CD4-positive, alpha-beta memory T cell (primary cell): ENCODE measurements at regions of chr10 and their contacts with region 1.

Region 1: GRCh38 chr10:24724381-24725228 is 918 bp upstream of the ARHGAP21 start:
- DNase-seq: peak; percentile 91 to 95 (median 94)
- H3K4me3 ChIP-seq: peak overlapping the region; percentile 88 to 90
- H3K4me3 Mint-ChIP-seq: peak overlapping the region; percentile 93 to 95 (median 95)
- H3K27ac ChIP-seq: peak overlapping the region; percentile 71
- H3K27ac Mint-ChIP-seq: peak overlapping the region; percentile 89 to 94 (median 92)
- H3K4me1 ChIP-seq: peaks cover 24% of the 10 kb centered on the region
- H3K4me1 Mint-ChIP-seq: peaks cover 5 to 25% (median 16%) of the 10 kb centered on the region in 4 donors
- H3K27me3 ChIP-seq: no peaks in the 10 kb centered on the region
- H3K27me3 Mint-ChIP-seq: no peaks in the 10 kb centered on the region

Region 2: DNA sequence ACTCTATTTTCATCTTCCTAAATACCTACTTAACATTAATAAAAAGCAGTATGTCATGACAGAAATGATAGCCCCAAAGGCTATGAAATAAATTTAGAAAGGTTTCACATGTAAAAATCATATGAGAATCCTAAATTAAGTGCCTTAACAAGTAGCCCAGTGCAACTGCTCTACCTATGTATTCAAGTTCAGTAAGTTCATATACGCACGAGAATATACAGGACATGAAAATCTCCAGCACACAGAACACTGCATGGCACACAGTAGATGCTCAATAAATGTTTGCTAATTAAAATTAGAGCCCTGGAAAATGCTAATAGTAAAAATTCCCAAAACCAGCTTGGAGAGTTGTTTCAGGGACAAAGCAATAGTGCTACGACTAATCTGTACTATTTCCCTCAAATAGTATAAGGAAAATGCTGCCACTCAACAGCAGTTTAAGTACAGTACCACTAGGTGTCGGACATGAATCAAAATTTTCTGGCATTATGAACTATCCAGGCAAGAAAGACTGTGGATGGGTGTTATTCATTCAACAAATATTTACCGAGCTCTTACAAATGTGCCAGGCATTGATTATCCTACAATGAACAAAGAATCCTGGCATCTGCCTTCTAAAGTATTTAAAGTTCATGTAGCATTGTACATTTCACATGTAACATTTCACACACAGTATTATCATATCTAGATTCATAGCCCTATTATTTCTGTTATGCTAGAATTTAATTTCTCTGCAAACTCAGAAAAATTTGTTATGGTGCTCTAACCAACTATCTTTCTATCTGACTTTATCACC is 81.8 kb before region 1 on chr10:
- CTCF ChIA-PET with region 1: interaction called, 8 read pairs
- POLR2A ChIA-PET with region 1: interaction called, 3 read pairs
- intact Hi-C with region 1: loop called (anchors 2 kb)
- DNase-seq: peak in 4 of 5 donors; percentile 54 to 58 (median 54)
- H3K4me3 ChIP-seq: no peak overlapping the region
- H3K4me3 Mint-ChIP-seq: no peak overlapping the region
- H3K27ac ChIP-seq: no peak overlapping the region
- H3K27ac Mint-ChIP-seq: no peak overlapping the region
- H3K4me1 ChIP-seq: peaks cover 11% of the 10 kb centered on the region
- H3K4me1 Mint-ChIP-seq: peaks cover 0 to 4% (median 2%) of the 10 kb centered on the region in 4 donors
- H3K27me3 ChIP-seq: no peaks in the 10 kb centered on the region
- H3K27me3 Mint-ChIP-seq: peaks cover 0 to 1% of the 10 kb centered on the region in 2 donors

Region 3: DNA sequence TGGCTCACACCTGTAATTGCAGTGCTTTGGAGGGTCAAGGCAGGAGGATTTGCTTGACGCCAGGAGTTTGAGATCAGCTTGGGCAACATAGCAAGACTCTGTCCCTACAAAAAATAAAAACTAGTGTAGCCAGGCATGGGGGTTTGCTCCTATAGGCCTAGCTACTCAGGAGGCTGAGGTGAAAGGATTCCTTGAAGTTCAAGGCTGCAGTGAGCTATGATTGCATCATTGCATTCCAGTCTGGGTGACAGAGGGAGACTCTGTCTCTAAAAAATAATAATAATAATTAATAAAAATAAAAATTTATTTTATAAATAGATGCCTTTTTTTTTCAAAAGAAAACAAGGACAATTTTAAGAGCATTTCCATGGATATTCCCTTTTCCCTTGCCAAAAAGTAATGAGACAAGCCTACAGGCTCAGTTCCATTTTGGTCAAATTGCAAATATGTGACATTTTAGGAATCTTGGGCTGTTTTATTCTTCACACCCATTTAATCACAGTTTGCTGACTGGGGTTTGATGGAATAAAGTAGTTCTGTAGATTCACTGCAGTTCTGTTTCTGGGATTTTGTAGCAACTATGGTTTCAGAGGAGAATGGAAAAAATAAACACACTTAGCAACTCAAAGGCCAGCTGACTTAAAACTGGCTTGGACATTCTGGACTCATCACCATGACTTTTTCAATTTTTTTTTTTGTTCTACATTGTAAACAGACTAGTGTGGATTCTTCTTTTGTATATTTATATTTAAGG is 47.5 kb after region 1 on chr10:
- CTCF ChIA-PET with region 1: no interaction called
- POLR2A ChIA-PET with region 1: no interaction called
- intact Hi-C with region 1: no loop called
- DNase-seq: no peak
- H3K4me3 ChIP-seq: no peak overlapping the region
- H3K4me3 Mint-ChIP-seq: no peak overlapping the region
- H3K27ac ChIP-seq: no peak overlapping the region
- H3K27ac Mint-ChIP-seq: no peak overlapping the region
- H3K4me1 ChIP-seq: no peaks in the 10 kb centered on the region
- H3K4me1 Mint-ChIP-seq: peaks cover 0 to 4% (median 0%) of the 10 kb centered on the region in 4 donors
- H3K27me3 ChIP-seq: no peaks in the 10 kb centered on the region
- H3K27me3 Mint-ChIP-seq: peaks cover 0 to 2% of the 10 kb centered on the region in 2 donors

Region 4: DNA sequence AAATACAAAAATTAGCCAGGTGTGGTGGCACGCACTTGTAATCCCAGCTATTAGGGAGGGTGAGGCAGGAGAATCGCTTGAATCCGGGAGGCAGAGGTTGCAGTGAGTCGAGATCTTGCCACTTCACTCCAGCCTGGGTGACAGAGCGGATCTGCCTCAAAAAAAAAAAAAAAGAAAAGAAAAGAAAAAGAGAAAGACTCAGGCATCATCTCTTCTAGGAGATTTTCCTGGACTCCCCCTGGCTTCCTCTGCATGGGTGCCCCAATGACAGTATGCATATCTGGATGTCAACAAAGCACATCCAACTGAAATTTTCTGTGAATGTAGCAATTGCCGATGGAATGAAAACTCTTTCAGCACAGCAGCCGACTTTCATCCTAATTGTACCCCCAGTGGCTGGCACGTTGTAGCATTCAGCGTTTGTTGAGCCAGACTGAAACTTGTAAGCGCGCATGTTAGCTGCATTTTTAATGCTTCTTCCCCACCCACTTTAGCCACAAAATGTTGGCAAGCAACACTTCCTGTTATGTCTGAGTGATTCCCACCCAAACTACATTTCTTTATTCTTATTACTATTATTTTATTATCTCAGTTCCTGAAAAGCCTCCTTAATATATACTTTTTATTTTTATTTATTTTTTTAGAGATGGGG is 157.6 kb after region 1 on chr10:
- CTCF ChIA-PET with region 1: interaction called, 3 read pairs
- POLR2A ChIA-PET with region 1: interaction called, 22 read pairs
- intact Hi-C with region 1: loop called (anchors 2 kb)
- DNase-seq: peak; percentile 47 to 60 (median 52)
- H3K4me3 ChIP-seq: peak overlapping the region in 1 of 2 donors; percentile 39
- H3K4me3 Mint-ChIP-seq: peak overlapping the region; percentile 74 to 89 (median 86)
- H3K27ac ChIP-seq: peak overlapping the region; percentile 25
- H3K27ac Mint-ChIP-seq: peak overlapping the region; percentile 82 to 97 (median 91)
- H3K4me1 ChIP-seq: peaks cover 65% of the 10 kb centered on the region
- H3K4me1 Mint-ChIP-seq: peaks cover 28 to 67% (median 41%) of the 10 kb centered on the region in 4 donors
- H3K27me3 ChIP-seq: no peaks in the 10 kb centered on the region
- H3K27me3 Mint-ChIP-seq: no peaks in the 10 kb centered on the region

Region 5: GRCh38 chr10:24952707-24953645 is 228.4 kb after region 1 on chr10:
- CTCF ChIA-PET with region 1: interaction called, 7 read pairs
- POLR2A ChIA-PET with region 1: interaction called, 27 read pairs
- intact Hi-C with region 1: loop called (anchors 1 kb)
- DNase-seq: peak; percentile 43 to 66 (median 49)
- H3K4me3 ChIP-seq: peak overlapping the region in 1 of 2 donors; percentile 59
- H3K4me3 Mint-ChIP-seq: peak overlapping the region; percentile 78 to 88 (median 84)
- H3K27ac ChIP-seq: peak overlapping the region; percentile 34
- H3K27ac Mint-ChIP-seq: peak overlapping the region; percentile 25 to 85 (median 66)
- H3K4me1 ChIP-seq: peaks cover 13% of the 10 kb centered on the region
- H3K4me1 Mint-ChIP-seq: peaks cover 13 to 37% (median 20%) of the 10 kb centered on the region in 4 donors
- H3K27me3 ChIP-seq: no peaks in the 10 kb centered on the region
- H3K27me3 Mint-ChIP-seq: no peaks in the 10 kb centered on the region

Region 6: DNA sequence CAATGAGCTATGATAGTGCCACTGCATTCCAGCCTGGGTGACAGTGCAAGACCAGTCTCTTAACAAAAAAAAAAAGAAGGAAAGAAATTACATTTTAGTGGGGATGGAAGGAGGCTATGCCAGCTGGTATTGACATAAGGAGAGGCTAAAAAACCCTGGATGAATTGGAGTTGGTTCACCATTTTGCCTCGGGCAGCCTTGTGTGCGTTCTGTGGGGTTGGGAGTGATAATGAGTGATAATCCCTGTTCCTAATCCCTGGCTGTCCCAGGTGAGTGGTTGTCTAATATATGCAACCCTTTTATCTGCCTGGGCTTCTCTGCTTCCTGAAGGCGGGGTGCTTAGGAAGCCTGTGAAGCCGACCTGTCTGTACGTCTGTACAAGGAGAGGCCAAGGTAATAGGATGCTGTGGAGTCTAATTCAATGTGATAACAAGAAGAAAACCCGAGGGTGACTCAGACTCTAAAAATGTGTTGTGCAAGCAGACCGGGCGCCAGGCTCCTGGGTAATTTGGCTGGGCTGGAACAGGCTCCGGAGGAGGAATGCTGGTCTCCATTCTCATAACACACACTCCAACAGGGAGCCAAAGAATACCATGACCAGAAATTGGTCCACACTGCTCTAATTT is 335.3 kb after region 1 on chr10:
- CTCF ChIA-PET with region 1: no interaction called
- POLR2A ChIA-PET with region 1: no interaction called
- intact Hi-C with region 1: no loop called
- DNase-seq: no peak
- H3K4me3 ChIP-seq: no peak overlapping the region
- H3K4me3 Mint-ChIP-seq: no peak overlapping the region
- H3K27ac ChIP-seq: no peak overlapping the region
- H3K27ac Mint-ChIP-seq: peak overlapping the region in 3 of 7 donors; percentile 7 to 23 (median 19)
- H3K4me1 ChIP-seq: peaks cover 14% of the 10 kb centered on the region
- H3K4me1 Mint-ChIP-seq: peaks cover 9 to 27% (median 17%) of the 10 kb centered on the region in 4 donors
- H3K27me3 ChIP-seq: no peaks in the 10 kb centered on the region
- H3K27me3 Mint-ChIP-seq: no peaks in the 10 kb centered on the region

Region 7: GRCh38 chr10:25080880-25081581 is 356.4 kb after region 1 on chr10:
- CTCF ChIA-PET with region 1: interaction called, 6 read pairs
- POLR2A ChIA-PET with region 1: no interaction called
- intact Hi-C with region 1: loop called (anchors 5 kb)
- DNase-seq: peak in 4 of 5 donors; percentile 40 to 58 (median 48)
- H3K4me3 ChIP-seq: no peak overlapping the region
- H3K4me3 Mint-ChIP-seq: no peak overlapping the region
- H3K27ac ChIP-seq: no peak overlapping the region
- H3K27ac Mint-ChIP-seq: peak overlapping the region in 3 of 7 donors; percentile 1 to 54 (median 30)
- H3K4me1 ChIP-seq: no peaks in the 10 kb centered on the region
- H3K4me1 Mint-ChIP-seq: peaks cover 0 to 10% (median 4%) of the 10 kb centered on the region in 4 donors
- H3K27me3 ChIP-seq: no peaks in the 10 kb centered on the region
- H3K27me3 Mint-ChIP-seq: peaks cover 2 to 10% of the 10 kb centered on the region in 2 donors